BJ (cell line): ENCODE measurements at regions of chr1 and their contacts with region 1.

Region 1: GRCh38 chr1:179809506-179810366 is 66.6 kb downstream of the FAM163A start:
- DNase-seq: no peak
- H3K4me3 ChIP-seq: no peak overlapping the region
- H3K27me3 ChIP-seq: peaks cover 7% of the 10 kb centered on the region
- CTCF ChIP-seq: peak; percentile 93

Region 2: DNA sequence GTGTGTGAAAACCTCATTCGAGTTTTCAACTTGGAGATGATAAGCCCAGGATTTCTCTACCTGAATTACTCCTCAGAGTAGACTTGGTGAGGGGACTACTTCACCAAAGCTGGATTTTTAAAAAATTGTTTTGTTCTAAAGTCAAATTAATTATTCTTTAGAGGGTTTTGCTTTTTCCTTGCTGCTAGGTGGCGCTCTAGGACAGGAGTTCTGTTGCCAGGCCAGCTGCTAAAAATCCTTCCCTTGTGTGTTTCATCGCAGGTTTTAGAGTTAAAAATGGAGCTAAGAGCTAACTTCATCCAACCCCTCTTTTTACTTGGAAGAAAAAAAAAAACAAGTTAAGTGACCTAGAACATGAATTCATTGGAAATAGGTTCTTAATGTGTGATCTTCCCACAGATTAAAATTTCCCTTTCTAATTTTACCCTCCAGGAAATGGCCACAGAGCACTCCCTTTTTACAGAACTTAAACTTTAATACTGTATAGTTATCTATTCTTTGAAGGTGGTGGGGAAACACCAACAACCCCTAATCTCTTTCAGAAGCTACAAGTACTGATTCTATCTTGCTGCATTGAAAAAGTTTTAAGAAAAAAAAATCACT is 103.3 kb before region 1 on chr1:
- CTCF ChIA-PET with region 1: interaction called, 447 read pairs
- POLR2A ChIA-PET with region 1: no interaction called
- DNase-seq: no peak
- H3K4me3 ChIP-seq: no peak overlapping the region
- H3K27me3 ChIP-seq: no peaks in the 10 kb centered on the region; the same call in 1 of the 2 replicates
- CTCF ChIP-seq: peak; percentile 77

Region 3: DNA sequence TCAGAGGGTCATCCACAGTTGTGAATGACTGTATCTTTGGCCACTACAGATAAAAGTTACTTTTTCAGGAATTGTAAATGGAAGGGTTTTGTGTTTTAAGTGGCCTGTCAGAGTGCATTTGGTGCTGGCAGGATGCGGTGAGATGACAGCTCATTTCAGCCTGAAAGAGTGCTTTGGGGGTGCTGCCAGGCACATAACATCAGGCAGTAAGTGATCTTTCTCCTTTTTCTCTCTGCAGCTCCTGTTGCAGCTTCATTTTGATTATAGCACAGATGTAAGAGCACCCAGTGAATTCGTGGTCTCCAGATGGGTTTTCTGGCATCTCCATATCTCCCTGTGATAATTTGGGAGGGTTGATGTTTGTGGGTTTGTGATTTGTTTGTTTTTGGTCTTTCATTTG is 81.5 kb before region 1 on chr1:
- CTCF ChIA-PET with region 1: interaction called, 13 read pairs
- POLR2A ChIA-PET with region 1: no interaction called
- DNase-seq: no peak
- H3K4me3 ChIP-seq: no peak overlapping the region
- H3K27me3 ChIP-seq: peaks cover 5% of the 10 kb centered on the region; the same call in 1 of the 2 replicates
- CTCF ChIP-seq: no peak

Region 4: DNA sequence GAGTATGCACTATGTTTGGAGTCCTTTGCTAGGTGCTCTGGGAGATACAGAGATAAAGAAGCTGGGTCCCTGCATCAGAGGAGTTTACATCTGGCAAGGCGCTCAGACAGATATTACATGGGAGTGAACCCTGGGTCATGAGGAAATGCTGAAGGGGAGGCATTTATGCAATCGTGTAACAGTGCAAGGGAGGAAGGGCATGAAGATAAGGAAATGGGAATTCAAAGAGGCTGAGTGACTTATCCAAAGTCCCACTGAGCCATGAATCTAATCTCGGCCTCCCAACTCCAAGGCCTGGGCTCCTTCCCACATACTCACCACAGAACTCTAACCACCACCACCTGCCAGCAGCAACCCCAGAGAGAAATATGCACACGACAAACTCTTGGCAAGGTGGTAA is 15.1 kb before region 1 on chr1:
- CTCF ChIA-PET with region 1: interaction called, 20 read pairs
- POLR2A ChIA-PET with region 1: no interaction called
- DNase-seq: no peak
- H3K4me3 ChIP-seq: no peak overlapping the region
- H3K27me3 ChIP-seq: peaks cover 5% of the 10 kb centered on the region; the same call in 1 of the 2 replicates
- CTCF ChIP-seq: no peak

Region 5: GRCh38 chr1:179831852-179832699 is 22.3 kb after region 1 on chr1:
- CTCF ChIA-PET with region 1: interaction called, 28 read pairs
- POLR2A ChIA-PET with region 1: no interaction called
- DNase-seq: no peak
- H3K4me3 ChIP-seq: no peak overlapping the region
- H3K27me3 ChIP-seq: peaks cover 2% of the 10 kb centered on the region; the same call in 1 of the 2 replicates
- CTCF ChIP-seq: no peak

Region 6: GRCh38 chr1:179930879-179931278 is 121.1 kb after region 1 on chr1:
- CTCF ChIA-PET with region 1: no interaction called
- POLR2A ChIA-PET with region 1: no interaction called
- DNase-seq: no peak
- H3K4me3 ChIP-seq: no peak overlapping the region
- H3K27me3 ChIP-seq: no peaks in the 10 kb centered on the region
- CTCF ChIP-seq: no peak

Region 7: DNA sequence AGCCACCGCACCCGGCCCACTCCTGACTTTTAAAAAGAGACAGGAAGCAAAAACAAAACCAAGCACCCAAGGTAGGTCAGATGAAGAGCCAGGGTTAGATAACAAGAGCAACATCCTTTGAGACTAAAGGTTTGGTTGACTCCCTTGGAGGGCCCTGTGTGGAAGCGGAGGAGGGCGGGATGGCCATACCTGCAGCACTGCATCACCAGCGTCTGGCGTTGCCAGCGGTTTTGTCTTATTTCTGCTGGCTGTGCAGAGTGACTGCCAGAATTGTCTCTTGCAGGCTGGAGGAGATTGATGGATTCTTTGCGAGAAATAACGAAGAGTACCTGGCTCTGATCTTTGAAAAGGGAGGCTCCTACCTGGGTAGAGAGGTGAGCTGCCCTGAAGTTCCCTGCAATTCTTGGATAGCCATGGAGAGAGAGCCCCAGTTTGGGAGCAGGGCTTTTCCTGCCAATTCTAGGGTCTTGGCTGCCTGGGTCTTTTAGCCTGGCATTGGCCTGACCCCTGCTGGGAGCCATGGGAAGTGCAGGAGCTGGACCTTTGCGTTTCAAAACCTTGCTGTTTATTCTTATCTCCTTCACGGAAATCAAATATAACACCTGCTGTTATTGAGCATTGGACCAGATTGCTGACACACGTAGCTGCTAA is 368.9 kb after region 1 on chr1:
- CTCF ChIA-PET with region 1: interaction called, 20 read pairs
- POLR2A ChIA-PET with region 1: no interaction called
- DNase-seq: no peak
- H3K4me3 ChIP-seq: no peak overlapping the region
- H3K27me3 ChIP-seq: no peaks in the 10 kb centered on the region
- CTCF ChIP-seq: peak; percentile 98

Region 8: DNA sequence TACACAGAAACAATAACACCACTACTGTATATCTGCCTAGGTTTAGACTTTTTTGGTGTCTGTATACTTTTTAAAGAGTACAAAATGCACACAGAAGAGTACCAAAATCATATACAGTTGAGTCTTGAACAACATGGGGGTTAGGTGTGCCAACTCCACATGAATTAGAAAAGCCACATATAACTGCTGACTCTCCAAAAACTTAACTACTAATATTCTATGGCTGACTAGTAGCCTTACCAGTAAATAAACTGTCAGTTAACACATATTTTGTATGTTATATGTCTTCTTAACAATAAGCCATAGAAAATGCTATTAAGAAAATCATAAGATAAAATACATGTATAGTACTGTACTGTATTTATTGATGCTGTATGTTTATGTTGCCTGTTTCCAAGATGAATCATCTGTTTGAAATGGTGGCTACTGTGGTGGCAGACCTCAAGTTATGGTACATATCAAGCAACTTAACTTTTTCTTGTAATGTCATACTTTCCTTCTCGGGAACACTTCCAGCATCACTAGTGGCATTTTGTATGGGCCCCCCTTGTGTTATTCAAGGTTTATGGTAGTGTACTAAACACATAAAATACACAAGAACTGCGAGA is 491.5 kb after region 1 on chr1:
- CTCF ChIA-PET with region 1: no interaction called
- POLR2A ChIA-PET with region 1: no interaction called
- DNase-seq: no peak
- H3K4me3 ChIP-seq: no peak overlapping the region
- H3K27me3 ChIP-seq: no peaks in the 10 kb centered on the region
- CTCF ChIP-seq: no peak